IMR-90 (cell line): ENCODE measurements at regions of chr1 and their contacts with region 1.

Region 1: GRCh38 chr1:94541175-94542087 is at the start of gene F3:
- DNase-seq: peak; percentile 91
- ATAC-seq: peak; percentile 77
- H3K4me3 ChIP-seq: peak within 1 kb of the TSS; percentile 92
- H3K27ac ChIP-seq: peak within 1 kb of the TSS; percentile 95
- H3K4me1 ChIP-seq: peaks cover 7% of the 10 kb centered on the region
- H3K27me3 ChIP-seq: no peaks in the 10 kb centered on the region
- CTCF ChIP-seq: peak; percentile 28; the same call in 1 of the 2 replicates
- POLR2A ChIP-seq: peak; percentile 95
- RAD21 ChIP-seq: peak; percentile 25; the same call in 1 of the 2 replicates
- total RNA-seq, gene F3: 75.6 and 102 TPM in 2 replicates

Region 2: DNA sequence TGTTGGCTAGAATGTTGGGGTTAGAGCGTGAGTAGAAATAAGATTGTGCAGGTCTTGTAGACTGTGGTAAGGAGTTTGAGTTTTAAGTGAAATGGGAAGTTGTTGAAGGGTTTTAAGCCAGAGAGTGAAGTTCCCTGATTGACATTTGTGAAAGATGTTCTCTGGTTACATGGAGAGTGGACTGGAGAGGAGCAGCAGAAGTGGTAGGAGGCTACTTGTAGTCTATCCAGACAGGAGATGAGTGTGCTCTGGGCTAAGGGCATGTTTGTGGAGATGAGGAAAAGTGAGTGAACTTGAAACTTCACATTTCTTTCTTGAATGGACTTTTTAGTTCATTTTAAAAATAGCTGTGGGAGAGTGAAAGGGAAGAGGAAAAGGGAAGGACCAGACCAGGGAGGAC is 36.8 kb before region 1 on chr1:
- CTCF ChIA-PET with region 1: no interaction called
- POLR2A ChIA-PET with region 1: no interaction called
- dilution Hi-C with region 1: no loop called
- in situ Hi-C with region 1: no loop called
- intact Hi-C with region 1: no loop called
- DNase-seq: no peak
- ATAC-seq: no peak
- H3K4me3 ChIP-seq: no peak overlapping the region
- H3K27ac ChIP-seq: no peak overlapping the region
- H3K4me1 ChIP-seq: no peaks in the 10 kb centered on the region
- H3K27me3 ChIP-seq: no peaks in the 10 kb centered on the region
- CTCF ChIP-seq: no peak
- POLR2A ChIP-seq: no peak
- RAD21 ChIP-seq: no peak

Region 3: GRCh38 chr1:94527447-94528031 is 13.9 kb before region 1 on chr1:
- CTCF ChIA-PET with region 1: no interaction called
- POLR2A ChIA-PET with region 1: interaction called, 24 read pairs
- dilution Hi-C with region 1: no loop called
- in situ Hi-C with region 1: no loop called
- intact Hi-C with region 1: no loop called
- DNase-seq: peak; percentile 62
- ATAC-seq: peak; percentile 31
- H3K4me3 ChIP-seq: no peak overlapping the region
- H3K27ac ChIP-seq: no peak overlapping the region
- H3K4me1 ChIP-seq: 0 out of 2 replicates have a peak, but pooled peaks cover 1% of the 10 kb centered on the region
- H3K27me3 ChIP-seq: no peaks in the 10 kb centered on the region
- CTCF ChIP-seq: 0 out of 2 replicates have a peak, but pooled peaks have one; percentile 15
- POLR2A ChIP-seq: no peak
- RAD21 ChIP-seq: peak; percentile 11; the same call in 1 of the 2 replicates

Region 4: DNA sequence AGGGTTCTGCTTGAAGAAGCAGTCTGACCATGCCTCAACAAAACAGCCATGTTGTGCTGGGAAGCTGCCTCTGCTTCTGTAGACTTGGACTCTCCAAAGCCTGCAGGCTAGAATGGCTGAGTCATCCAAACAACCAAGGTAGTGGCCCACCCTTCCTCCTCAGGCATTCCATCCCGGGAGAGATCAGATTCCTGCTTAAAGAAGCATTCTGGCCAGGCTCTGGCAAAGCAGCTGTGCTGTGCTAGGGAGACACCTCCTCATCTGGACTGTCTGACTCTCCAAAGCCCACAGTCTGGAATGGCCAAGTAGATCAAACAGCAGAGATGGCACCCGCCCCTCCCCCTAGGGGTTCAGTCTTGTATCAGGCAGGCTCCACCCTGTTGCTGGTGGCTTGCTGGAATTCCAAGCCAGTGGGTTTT is 38.5 kb after region 1 on chr1:
- CTCF ChIA-PET with region 1: no interaction called
- POLR2A ChIA-PET with region 1: interaction called, 28 read pairs
- dilution Hi-C with region 1: no loop called
- in situ Hi-C with region 1: no loop called
- intact Hi-C with region 1: loop called (anchors 1 kb)
- DNase-seq: peak; percentile 98
- ATAC-seq: peak; percentile 96
- H3K4me3 ChIP-seq: no peak overlapping the region
- H3K27ac ChIP-seq: peak overlapping the region; percentile 94
- H3K4me1 ChIP-seq: peaks cover 20% of the 10 kb centered on the region
- H3K27me3 ChIP-seq: no peaks in the 10 kb centered on the region
- CTCF ChIP-seq: 0 out of 2 replicates have a peak, but pooled peaks have one; percentile 7
- POLR2A ChIP-seq: no peak
- RAD21 ChIP-seq: peak; percentile 33

Region 5: GRCh38 chr1:94608142-94608851 is 66.9 kb after region 1 on chr1:
- CTCF ChIA-PET with region 1: no interaction called
- POLR2A ChIA-PET with region 1: interaction called, 8 read pairs
- dilution Hi-C with region 1: no loop called
- in situ Hi-C with region 1: loop called (anchors 5 kb)
- intact Hi-C with region 1: no loop called
- DNase-seq: no peak
- ATAC-seq: no peak
- H3K4me3 ChIP-seq: no peak overlapping the region
- H3K27ac ChIP-seq: peak overlapping the region; percentile 60
- H3K4me1 ChIP-seq: peaks cover 22% of the 10 kb centered on the region
- H3K27me3 ChIP-seq: no peaks in the 10 kb centered on the region
- CTCF ChIP-seq: no peak
- POLR2A ChIP-seq: no peak
- RAD21 ChIP-seq: no peak

Region 6: DNA sequence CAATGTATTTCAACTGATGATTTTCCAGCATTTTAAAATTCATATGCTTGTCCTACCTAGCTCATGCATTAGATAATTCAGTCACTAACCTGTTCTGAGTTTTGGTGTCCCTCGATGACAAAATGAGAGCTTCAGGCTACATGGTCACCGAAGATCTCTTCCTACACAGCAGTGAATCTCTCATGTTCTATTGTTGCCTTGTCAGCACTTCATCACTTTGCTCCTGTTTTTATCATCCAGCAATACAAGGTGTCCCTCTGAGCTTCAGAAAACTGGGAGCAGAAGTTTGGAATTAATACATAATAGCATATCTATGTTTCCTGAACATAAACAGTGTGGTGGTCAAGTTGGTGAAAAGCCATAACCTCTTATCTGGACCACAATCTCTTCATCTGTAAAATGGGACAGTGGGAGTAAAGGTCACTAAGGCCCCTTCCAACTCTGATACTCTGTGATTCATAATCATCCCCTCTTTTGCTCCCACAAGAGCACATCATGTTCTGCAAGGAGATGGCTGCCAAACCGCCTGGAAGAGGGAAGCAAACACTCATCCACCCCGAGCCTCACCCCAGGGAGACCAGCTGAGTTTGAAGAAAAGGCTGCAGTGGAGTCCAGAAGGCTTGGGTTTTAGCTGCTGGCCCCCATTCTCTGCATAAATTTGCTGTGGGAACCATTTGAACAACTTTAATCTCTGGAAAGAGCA is 138.1 kb after region 1 on chr1:
- CTCF ChIA-PET with region 1: no interaction called
- POLR2A ChIA-PET with region 1: interaction called, 5 read pairs
- dilution Hi-C with region 1: no loop called
- in situ Hi-C with region 1: no loop called
- intact Hi-C with region 1: loop called (anchors 5 kb)
- DNase-seq: no peak
- ATAC-seq: no peak
- H3K4me3 ChIP-seq: no peak overlapping the region
- H3K27ac ChIP-seq: no peak overlapping the region
- H3K4me1 ChIP-seq: peaks cover 13% of the 10 kb centered on the region
- H3K27me3 ChIP-seq: no peaks in the 10 kb centered on the region
- CTCF ChIP-seq: no peak
- POLR2A ChIP-seq: no peak
- RAD21 ChIP-seq: no peak

Region 7: DNA sequence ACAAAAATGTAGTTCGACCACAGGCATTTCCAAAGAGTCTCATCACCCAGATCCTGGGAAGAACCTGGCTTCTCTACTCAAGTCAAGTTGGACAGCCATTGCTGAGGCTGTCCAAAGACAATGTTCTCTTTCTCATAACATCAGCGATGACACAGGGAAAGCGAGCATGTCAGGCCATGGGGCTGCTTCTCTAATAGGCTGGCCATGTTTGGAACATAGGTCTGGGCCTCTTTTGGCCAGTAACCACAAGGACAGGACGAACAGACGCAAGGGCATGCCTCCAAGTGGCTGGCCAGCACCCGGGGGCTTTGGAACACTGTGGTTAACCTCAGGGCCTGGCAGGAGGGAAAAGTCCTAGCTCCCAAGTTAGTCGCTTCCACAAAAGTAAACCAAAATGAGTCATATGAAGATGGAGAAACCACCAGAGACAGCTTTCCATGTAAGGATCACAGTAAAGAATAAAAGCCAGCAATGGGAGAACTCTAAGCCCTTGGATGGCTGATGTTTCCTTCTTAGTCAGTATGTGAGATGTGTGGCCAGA is 198.2 kb after region 1 on chr1:
- CTCF ChIA-PET with region 1: no interaction called
- POLR2A ChIA-PET with region 1: interaction called, 17 read pairs
- dilution Hi-C with region 1: no loop called
- in situ Hi-C with region 1: no loop called
- intact Hi-C with region 1: no loop called
- DNase-seq: peak; percentile 97
- ATAC-seq: peak; percentile 65
- H3K4me3 ChIP-seq: no peak overlapping the region
- H3K27ac ChIP-seq: peak overlapping the region; percentile 90
- H3K4me1 ChIP-seq: peaks cover 40% of the 10 kb centered on the region
- H3K27me3 ChIP-seq: no peaks in the 10 kb centered on the region
- CTCF ChIP-seq: no peak
- POLR2A ChIP-seq: no peak
- RAD21 ChIP-seq: 0 out of 2 replicates have a peak, but pooled peaks have one; percentile 11